AG04450 (cell line): ENCODE measurements at regions of chr4 and their contacts with region 1.

Region 1: DNA sequence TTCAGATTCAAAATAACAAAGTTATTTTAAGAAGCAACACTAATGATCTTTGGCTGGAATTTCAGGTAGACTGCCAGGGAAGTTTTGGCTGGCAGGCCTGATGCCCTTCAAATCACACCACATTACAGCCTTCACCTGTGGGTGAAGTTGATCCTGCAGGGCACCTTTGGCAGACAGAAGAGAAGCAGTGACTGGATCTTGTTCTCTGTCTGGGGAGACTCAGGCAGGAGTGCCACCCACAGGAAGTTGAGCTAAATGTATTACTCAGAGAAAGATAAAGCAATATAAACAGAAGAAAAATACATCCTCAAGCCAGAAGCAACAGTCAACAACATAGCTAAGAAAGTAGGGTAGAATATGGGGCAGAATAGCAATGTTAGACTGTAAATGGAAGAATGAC is 12.8 kb upstream of the CFAP299 start:
- DNase-seq: no peak
- H3K4me3 ChIP-seq: no peak overlapping the region
- H3K27ac ChIP-seq: no peak overlapping the region
- H3K27me3 ChIP-seq: no peaks in the 10 kb centered on the region
- CTCF ChIP-seq: peak; percentile 47

Region 2: GRCh38 chr4:80335554-80336358 is 13.0 kb after region 1 on chr4 and contains the start of gene CFAP299:
- CTCF ChIA-PET with region 1: interaction called, 14 read pairs
- POLR2A ChIA-PET with region 1: no interaction called
- DNase-seq: peak; percentile 75
- H3K4me3 ChIP-seq: peak within 1 kb of the TSS; percentile 82
- H3K27ac ChIP-seq: no peak within 1 kb of the TSS
- H3K27me3 ChIP-seq: no peaks in the 10 kb centered on the region
- CTCF ChIP-seq: peak; percentile 66
- polyA plus RNA-seq, gene CFAP299: 1.4 and 1.9 TPM in 2 replicates